Right ventricle myocardium inferior (tissue), 1 donor: ENCODE measurements at regions of chr10 and their contacts with region 1.

Region 1: GRCh38 chr10:109966961-109967738 is 40.6 kb upstream of the ADD3 start:
- DNase-seq: no peak
- ATAC-seq: no peak

Region 2: DNA sequence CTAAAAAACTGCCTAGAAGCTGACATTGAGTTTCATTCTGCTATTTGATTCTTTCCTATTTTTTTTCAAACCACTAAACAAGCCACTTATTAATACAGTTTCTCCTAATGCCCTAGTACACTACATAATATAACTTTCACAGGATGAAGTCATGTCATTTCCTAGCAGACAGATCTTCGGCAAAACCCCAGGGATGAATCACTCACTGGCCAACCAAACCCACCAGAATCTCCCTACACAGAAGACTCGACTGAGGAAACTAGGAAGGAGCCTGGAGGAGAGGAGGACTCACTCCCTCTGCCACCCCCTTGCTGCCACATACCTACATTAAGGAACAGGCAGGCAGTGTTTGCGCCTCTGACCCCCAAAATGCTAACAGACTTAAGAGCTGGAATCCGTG is 77.3 kb before region 1 on chr10:
- intact Hi-C with region 1: loop called (anchors 5 kb)
- DNase-seq: no peak
- ATAC-seq: no peak

Region 3: GRCh38 chr10:110093722-110094121 is 126.6 kb after region 1 on chr10:
- intact Hi-C with region 1: no loop called
- DNase-seq: no peak
- ATAC-seq: no peak